Activated naive CD4-positive, alpha-beta T cell treated with anti-CD3 and anti-CD28 coated beads, Interleukin-2, amount 10 ng/mL, durations not matched to agents 7 days and 5 days (primary cell): ENCODE measurements at regions of chr22 and their contacts with region 1.

Region 1: GRCh38 chr22:46116491-46116958 is 33.8 kb upstream of the PPARA start:
- DNase-seq: peak; percentile 92
- H3K4me3 Mint-ChIP-seq: no peak overlapping the region
- H3K27ac Mint-ChIP-seq: peak overlapping the region; percentile 62
- H3K4me1 Mint-ChIP-seq: peaks cover 9% of the 10 kb centered on the region
- H3K27me3 Mint-ChIP-seq: no peaks in the 10 kb centered on the region

Region 2: DNA sequence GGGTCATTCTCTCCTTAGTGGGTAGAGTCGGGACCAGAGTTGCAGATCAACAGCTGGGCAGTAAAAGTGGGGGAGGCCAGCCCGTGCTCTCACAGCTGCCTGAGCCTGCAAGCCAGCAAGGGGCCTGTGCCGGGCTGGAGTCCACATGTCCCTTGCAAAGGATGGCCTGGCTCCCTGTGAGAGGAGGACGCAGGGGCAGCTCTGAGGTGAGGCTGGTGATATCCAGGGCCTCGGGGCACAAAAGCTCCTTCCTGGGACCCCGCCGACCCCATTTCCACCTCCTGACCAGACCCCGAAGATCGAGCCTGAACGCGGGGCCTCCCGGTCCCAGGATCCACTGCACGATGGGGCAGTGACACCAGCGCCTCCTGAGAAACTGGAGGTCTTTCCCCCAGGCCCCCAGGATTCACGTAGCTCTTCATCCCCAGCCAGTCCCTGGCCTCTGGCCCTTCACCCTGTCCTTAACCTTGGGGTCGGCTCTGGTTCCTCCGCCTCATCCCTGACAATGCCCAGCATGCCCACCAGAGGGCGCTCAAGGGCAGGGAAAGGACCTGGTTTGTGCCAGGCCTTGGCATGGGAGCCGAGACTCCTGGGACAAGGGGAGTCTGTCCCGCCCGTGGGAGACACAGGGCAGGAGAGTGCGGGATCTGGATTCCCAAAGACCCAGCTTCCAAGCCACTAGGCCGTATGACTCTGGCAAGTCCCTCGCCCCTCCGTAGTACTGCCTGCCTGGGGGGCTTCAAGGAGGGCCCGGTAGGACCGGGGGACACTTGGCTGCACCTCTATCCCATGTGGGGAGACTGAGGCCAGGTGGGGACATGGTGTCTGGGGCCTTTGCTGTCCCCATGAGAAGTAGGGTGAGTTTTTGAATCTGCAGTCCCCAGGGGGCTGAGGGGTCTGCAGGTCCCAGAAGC is 121.8 kb before region 1 on chr22:
- CTCF ChIA-PET with region 1: interaction called, 58 read pairs
- DNase-seq: peak; percentile 85
- H3K4me3 Mint-ChIP-seq: no peak overlapping the region
- H3K27ac Mint-ChIP-seq: no peak overlapping the region
- H3K4me1 Mint-ChIP-seq: peaks cover 6% of the 10 kb centered on the region
- H3K27me3 Mint-ChIP-seq: peaks cover 28% of the 10 kb centered on the region

Region 3: DNA sequence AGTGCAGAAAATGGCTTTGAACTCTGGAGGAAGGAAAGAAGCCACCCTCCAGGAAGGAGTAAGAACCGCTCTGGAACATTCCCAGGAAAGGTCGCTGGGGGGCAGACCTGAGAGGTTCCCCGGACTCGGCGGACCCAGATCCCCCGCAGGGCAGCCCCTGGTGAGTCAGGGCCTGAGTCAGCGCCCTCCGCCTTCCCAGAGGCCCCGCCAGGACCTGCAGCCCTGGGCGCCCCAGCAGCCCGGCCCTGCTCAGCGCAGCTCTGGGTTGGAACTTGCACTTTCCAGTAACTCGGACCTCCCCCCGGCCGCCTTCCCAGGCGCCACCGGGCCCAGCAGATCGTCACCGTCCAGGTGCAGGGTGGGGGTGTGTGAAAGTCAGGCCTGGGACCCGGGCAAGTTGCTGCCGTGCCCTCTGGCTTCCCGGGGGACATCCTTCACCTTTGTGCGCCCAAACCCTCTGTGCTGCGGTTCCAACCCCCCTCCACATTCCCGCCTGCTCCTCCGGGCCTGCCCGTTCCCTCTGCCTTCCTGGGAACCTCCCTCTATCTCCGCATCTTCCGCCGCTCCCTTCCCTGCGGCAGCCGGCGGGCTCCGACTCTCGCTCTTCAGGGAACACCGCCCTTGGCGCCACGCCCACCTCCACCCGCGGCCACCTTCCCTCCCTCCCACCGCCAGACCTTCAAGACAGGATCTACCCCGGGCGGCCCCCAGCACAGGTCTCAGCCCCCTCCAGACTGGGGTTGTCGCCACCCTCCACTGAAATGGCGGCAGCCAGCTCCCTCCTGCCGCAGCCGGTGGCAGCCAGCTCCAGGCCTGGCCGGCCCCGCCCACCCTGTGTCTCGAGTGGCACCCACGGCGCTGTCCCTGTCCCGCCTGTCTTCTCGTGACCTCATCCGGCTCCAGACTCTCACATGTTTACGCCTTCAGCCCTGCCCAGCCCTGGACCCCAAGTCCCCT is 102.8 kb before region 1 on chr22:
- CTCF ChIA-PET with region 1: interaction called, 257 read pairs
- DNase-seq: peak; percentile 83
- H3K4me3 Mint-ChIP-seq: peak overlapping the region; percentile 82
- H3K27ac Mint-ChIP-seq: peak overlapping the region; percentile 62
- H3K4me1 Mint-ChIP-seq: peaks cover 17% of the 10 kb centered on the region
- H3K27me3 Mint-ChIP-seq: peaks cover 28% of the 10 kb centered on the region